GM13977 (cell line): ENCODE measurements at regions of chr3 and their contacts with region 1.

Region 1: DNA sequence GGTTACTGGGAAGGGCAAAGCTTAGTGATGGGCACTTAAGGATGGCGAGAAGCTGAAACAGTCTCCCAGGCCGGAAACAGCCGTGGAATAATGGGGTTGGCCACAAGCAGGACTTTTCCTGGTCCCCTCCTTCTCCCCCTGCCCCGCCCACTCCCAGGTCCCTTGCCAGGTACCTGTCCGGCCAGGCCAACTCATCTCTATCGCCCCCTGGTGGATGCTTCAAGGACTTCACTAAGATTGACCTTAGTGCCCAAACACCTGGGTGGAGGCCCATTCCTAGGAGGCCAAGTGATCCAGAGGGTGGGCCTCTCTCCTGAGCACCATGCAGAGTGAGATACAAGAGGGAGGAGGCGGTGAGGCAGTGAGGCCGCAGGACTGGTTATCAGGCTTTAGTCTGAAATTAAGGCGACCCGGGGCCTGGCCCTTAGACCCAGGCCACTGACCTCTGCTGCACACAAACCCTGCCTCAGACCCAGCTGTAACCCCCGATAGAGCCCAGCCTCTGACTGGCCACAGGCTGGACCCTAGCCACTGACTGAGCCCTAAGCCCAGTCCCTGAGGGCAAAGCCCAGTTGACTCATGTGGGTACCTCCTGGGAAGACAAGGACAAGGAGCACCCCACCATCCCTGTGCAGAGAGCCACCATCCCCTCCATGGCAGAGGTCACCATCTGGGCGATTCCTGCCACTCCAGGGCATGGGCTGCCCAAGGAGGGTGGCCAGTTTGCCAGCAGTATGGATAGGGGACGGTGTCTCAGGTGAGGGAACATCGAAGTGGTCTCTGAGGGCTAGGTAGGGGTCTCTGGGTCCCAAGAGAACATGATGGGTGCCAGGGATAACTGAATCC is 37.6 kb downstream of the VIPR1 start:
- DNase-seq: peak; percentile 85
- CTCF ChIP-seq: peak; percentile 85

Region 2: DNA sequence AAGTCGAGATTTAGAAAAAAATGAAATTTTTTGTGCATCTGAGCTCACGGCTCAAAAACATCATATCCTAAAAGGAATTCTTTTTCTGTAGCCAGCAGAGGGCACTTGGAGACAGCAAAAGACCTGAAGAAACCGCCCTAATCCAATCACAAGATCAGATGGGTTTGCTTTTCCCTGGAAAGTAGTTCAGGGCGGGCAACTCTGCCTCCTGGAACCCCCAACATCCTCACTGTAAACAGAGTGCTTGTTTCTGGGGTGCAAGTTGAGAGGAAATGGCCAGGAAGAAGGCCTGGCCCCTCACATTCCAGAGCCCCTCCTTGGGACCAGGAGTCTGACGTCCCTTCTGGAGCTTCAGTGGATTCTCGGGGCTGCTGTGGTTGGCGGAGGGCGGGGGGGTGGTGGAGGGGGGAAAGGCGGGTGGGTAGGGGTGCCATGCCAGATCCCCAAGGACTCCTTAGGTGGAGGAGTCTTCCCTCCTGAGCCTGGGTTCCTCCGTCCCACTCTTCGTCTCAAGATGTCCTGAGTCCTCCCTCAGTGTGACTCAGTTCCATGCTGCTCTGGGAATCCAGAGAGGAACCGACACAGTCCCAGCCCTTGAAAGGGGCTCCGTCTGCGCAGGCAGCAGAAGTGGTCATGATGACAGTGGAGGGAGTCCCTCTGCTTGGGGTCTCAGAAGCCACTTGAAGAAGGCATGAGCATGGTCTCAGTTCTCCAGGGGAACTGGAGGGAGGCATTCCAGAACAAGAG is 310.0 kb before region 1 on chr3:
- in situ Hi-C with region 1: loop called (anchors 10 kb)
- DNase-seq: no peak
- CTCF ChIP-seq: peak; percentile 40